ENCODE measurements at regions of chr14 and their contacts with region 1.

Region 1: DNA sequence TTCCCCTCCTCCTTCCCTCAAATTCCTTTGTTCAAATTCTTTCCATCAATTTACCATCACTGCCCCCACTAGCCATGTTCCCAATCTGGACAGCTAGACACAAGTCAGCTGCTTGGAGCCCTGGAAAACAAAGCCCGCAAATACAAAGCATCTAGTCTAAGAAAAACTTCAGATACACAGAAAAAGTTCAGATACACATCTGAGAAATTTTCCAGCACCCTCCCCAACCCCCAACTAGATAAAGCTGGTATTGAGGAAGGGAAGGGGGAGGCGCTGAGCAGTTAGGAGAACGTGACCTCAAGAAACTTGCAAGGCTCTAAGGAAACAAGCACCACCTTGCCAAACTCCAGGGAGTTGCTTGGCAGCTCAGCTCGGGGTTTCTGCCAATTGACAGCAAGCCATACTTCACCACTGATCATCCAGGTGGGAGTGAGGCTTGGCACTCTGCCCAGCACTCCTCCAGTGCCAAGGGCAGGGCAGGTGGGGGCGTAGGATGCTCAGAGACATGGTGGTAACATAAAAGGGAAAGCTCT is 5.1 kb upstream of the CNIH1 start:
- DNase-seq: peak; percentile 26
- H3K4me3 Mint-ChIP-seq: no peak overlapping the region
- H3K27ac Mint-ChIP-seq: no peak overlapping the region
- H3K4me1 Mint-ChIP-seq: peaks cover 23% of the 10 kb centered on the region
- H3K27me3 Mint-ChIP-seq: no peaks in the 10 kb centered on the region
- CTCF ChIP-seq: no peak

Region 2: DNA sequence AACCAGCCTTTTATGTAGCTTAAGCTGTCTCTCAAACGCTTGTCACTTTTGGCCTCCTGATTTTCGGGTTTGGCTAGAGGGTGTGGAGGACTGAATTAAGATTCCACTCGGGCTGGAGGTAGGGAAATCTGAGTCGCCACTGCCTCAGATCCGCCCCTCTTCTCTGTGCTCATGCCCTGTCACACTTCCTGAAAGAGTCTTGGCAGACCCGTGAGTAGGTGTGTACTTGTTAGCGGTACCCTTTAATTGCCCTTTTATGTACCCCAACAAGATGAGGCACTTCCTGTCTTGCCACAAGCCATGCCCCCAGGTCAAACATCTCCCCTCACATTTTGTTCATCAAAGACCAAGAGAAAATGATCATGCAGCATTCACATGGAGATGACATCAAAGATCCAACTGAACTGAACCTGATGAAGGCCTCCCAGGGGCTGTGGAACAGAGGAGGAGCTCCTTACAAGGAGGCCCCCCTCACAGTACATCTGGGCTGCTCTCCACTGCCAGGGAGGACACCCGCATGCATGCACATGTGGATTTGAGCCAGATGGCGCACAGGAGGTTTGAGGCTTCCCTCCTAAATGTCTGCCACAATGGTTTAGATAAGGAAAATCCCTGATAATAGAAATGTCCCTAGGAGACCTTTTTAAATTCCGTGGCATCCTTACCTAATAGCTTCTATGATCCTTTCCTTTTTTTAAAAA is 135.9 kb before region 1 on chr14:
- CTCF ChIA-PET with region 1: no interaction called
- intact Hi-C with region 1: no loop called
- DNase-seq: no peak
- H3K4me3 Mint-ChIP-seq: no peak overlapping the region
- H3K27ac Mint-ChIP-seq: no peak overlapping the region
- H3K4me1 Mint-ChIP-seq: peaks cover 17% of the 10 kb centered on the region
- H3K27me3 Mint-ChIP-seq: peaks cover 7% of the 10 kb centered on the region
- CTCF ChIP-seq: no peak

Region 3: DNA sequence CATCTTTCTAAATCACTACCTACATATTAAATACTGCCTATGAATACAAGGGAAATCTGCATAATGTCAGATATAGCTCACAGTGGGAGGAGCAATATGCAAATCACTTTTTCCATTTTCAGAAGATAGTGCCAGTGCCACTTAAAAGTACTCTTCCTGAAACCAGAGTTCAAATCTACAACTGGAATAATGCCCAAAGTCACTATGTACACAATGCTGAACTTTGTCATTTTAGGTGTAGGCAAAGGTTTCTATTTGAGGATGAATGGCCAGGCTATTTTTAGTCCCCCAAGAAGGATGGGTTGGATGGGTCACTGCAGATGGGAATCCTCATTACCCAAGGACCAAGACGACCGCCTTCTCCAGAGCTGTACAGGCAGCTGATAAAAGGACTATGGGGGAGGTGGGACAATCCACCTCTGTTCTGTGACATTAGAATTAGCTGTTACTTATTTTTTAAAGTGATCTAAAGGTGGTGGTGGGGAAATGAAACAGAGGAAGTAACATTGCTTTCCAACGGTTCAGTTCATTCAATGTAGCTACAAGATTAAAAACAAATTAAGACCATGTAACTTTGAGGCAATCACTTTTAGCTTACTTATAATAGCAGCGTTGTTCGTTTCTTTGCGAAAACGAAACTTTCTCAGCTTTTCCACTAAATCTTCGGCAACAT is 37.0 kb after region 1 on chr14:
- CTCF ChIA-PET with region 1: interaction called, 7 read pairs
- intact Hi-C with region 1: loop called (anchors 5 kb)
- DNase-seq: no peak
- H3K4me3 Mint-ChIP-seq: no peak overlapping the region
- H3K27ac Mint-ChIP-seq: no peak overlapping the region
- H3K4me1 Mint-ChIP-seq: peaks cover 45% of the 10 kb centered on the region
- H3K27me3 Mint-ChIP-seq: no peaks in the 10 kb centered on the region
- CTCF ChIP-seq: no peak